Naive thymus-derived CD4-positive, alpha-beta T cell (primary cell): ENCODE measurements at regions of chrX and their contacts with region 1.

Region 1: GRCh38 chrX:129823115-129823514 is 20.6 kb downstream of the ZDHHC9 start:
- DNase-seq: peak in 8 of 9 donors; percentile 23 to 68 (median 52)
- ATAC-seq: peak; percentile 81
- H3K4me3 ChIP-seq: no peak overlapping the region
- H3K4me3 Mint-ChIP-seq: no peak overlapping the region
- H3K27ac ChIP-seq: no peak overlapping the region
- H3K27ac Mint-ChIP-seq: peak overlapping the region in 1 of 9 donors; percentile 83
- H3K4me1 ChIP-seq: peaks cover 0 to 6% of the 10 kb centered on the region in 2 donors
- H3K4me1 Mint-ChIP-seq: peaks cover 0 to 21% (median 14%) of the 10 kb centered on the region in 7 donors
- H3K27me3 ChIP-seq: no peaks in the 10 kb centered on the region
- H3K27me3 Mint-ChIP-seq: no peaks in the 10 kb centered on the region

Region 2: GRCh38 chrX:129637217-129638109 is 185.7 kb before region 1 on chrX:
- CTCF ChIA-PET with region 1: interaction called, 9 read pairs
- POLR2A ChIA-PET with region 1: no interaction called
- intact Hi-C with region 1: loop called (anchors 1 kb)
- DNase-seq: peak; percentile 48 to 80 (median 63)
- ATAC-seq: peak; percentile 92
- H3K4me3 ChIP-seq: no peak overlapping the region
- H3K4me3 Mint-ChIP-seq: no peak overlapping the region
- H3K27ac ChIP-seq: no peak overlapping the region
- H3K27ac Mint-ChIP-seq: peak overlapping the region in 3 of 9 donors; percentile 34 to 68 (median 55)
- H3K4me1 ChIP-seq: peaks cover 0 to 4% of the 10 kb centered on the region in 2 donors
- H3K4me1 Mint-ChIP-seq: peaks cover 0 to 10% (median 0%) of the 10 kb centered on the region in 7 donors
- H3K27me3 ChIP-seq: no peaks in the 10 kb centered on the region
- H3K27me3 Mint-ChIP-seq: no peaks in the 10 kb centered on the region

Region 3: DNA sequence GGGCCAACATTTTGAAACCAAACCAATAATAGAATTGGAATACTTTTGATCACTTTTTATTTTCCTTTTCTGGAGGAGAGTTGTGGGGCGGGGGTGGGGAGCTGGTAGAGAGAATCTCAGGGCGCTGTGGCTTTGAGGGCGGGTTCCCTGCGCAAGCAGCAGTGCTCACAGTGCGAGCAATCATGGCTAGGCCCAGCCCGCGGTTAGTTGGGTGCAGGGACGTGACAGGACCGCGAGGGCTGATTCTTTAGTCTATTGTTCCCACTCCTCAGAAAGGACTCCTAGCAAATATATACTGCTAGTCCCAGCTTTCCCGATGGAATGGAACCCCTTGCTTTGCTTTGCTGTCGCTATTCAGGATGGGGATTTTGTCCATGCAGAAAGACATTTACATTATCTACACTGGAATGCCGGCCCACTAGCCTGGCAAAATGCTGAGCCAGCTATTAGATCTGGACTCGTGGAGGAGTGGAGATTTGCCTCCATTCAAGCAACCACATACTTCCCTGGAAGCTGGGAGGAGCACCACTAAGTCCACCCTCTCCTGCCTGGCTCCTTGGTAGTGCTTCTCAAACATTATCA is 144.4 kb before region 1 on chrX:
- CTCF ChIA-PET with region 1: interaction called, 14 read pairs
- POLR2A ChIA-PET with region 1: interaction called, 3 read pairs
- intact Hi-C with region 1: loop called in 1 of 2 experiments (anchors 1 kb)
- DNase-seq: peak in 7 of 9 donors; percentile 6 to 40 (median 34)
- ATAC-seq: peak; percentile 78
- H3K4me3 ChIP-seq: peak overlapping the region; percentile 53
- H3K4me3 Mint-ChIP-seq: peak overlapping the region; percentile 62 to 85 (median 70)
- H3K27ac ChIP-seq: peak overlapping the region; percentile 38
- H3K27ac Mint-ChIP-seq: peak overlapping the region in 7 of 9 donors; percentile 5 to 91 (median 48)
- H3K4me1 ChIP-seq: peaks cover 5 to 14% of the 10 kb centered on the region in 2 donors
- H3K4me1 Mint-ChIP-seq: peaks cover 10 to 36% (median 23%) of the 10 kb centered on the region in 7 donors
- H3K27me3 ChIP-seq: no peaks in the 10 kb centered on the region
- H3K27me3 Mint-ChIP-seq: peaks cover 0 to 21% (median 0%) of the 10 kb centered on the region in 5 donors

Region 4: DNA sequence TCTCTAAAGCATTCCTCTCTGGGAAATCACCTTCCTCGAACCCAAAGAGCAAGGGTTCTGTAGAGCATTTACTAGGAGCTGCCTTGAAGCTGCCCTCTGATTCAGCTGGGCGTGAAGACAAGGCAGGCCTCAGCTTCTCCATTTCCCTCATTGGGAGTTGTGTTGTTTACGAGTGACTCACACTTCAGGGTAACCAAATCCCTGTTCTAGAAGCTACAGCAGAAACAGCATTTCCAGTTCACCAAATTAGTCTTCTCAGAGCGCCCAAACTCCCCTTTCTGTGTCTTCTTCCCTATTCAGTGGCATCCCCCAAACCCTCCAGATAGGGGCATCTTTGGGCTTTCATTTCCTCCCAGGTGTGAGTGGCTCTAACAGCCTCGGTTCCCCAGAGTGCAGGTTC is 85.2 kb before region 1 on chrX:
- CTCF ChIA-PET with region 1: no interaction called
- POLR2A ChIA-PET with region 1: no interaction called
- intact Hi-C with region 1: loop called in 1 of 2 experiments (anchors 2 kb)
- DNase-seq: no peak
- ATAC-seq: peak; percentile 63
- H3K4me3 ChIP-seq: no peak overlapping the region
- H3K4me3 Mint-ChIP-seq: peak overlapping the region in 1 of 10 donors; percentile 42
- H3K27ac ChIP-seq: no peak overlapping the region
- H3K27ac Mint-ChIP-seq: peak overlapping the region in 2 of 9 donors; percentile 53 to 72
- H3K4me1 ChIP-seq: peaks cover 8 to 17% of the 10 kb centered on the region in 2 donors
- H3K4me1 Mint-ChIP-seq: peaks cover 14 to 45% (median 29%) of the 10 kb centered on the region in 7 donors
- H3K27me3 ChIP-seq: no peaks in the 10 kb centered on the region
- H3K27me3 Mint-ChIP-seq: no peaks in the 10 kb centered on the region

Region 5: DNA sequence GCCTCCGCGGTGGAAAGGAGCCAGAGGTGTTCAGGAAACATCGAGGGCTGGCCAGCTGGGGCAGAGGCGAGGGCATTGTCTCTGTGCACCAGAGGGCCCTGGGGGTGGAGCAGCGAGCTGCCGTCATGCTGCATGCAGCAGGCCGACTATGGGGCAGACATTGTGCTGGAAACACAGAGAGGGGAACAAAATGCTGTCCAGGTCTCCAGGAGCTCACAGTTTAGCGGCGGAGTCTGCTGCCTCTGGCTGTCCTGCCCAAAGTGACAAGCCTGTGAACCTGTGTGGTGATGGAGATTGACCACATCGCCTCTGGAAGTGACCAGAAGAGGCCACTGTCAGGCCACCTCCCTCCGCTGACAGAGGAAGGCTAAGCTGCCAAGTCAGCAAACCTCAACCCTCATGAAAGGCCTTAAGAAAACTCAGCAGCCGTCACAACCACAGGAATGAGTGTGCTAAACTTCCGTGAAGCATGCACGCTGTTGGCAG is 63.5 kb before region 1 on chrX:
- CTCF ChIA-PET with region 1: interaction called, 11 read pairs
- POLR2A ChIA-PET with region 1: interaction called, 3 read pairs
- intact Hi-C with region 1: loop called (anchors 1 to 2 kb)
- DNase-seq: peak in 8 of 9 donors; percentile 40 to 69 (median 59)
- ATAC-seq: peak; percentile 85
- H3K4me3 ChIP-seq: no peak overlapping the region
- H3K4me3 Mint-ChIP-seq: peak overlapping the region; percentile 8 to 64 (median 51)
- H3K27ac ChIP-seq: no peak overlapping the region
- H3K27ac Mint-ChIP-seq: peak overlapping the region in 7 of 9 donors; percentile 10 to 90 (median 31)
- H3K4me1 ChIP-seq: peaks cover 50 to 55% of the 10 kb centered on the region in 2 donors
- H3K4me1 Mint-ChIP-seq: peaks cover 16 to 67% (median 59%) of the 10 kb centered on the region in 7 donors
- H3K27me3 ChIP-seq: no peaks in the 10 kb centered on the region
- H3K27me3 Mint-ChIP-seq: no peaks in the 10 kb centered on the region

Region 6: DNA sequence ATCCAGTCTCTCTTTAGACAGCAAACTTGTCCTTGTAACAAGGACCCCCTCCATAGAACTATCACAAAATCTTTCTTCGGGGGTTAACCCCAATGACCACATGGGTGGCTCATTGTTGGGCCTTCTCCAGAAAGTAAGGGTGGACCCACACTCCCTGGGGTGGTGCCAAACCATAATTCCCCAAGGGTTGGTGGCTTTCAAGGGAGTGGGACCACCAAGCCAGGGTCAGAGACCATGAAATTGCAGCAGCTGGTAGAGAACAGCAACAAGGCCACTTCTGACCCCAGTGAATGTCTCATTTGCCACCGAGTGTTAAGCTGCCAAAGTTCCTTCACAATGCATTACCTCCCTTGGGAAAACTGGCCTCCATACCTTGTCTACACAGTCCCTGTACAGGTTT is 49.4 kb after region 1 on chrX:
- CTCF ChIA-PET with region 1: no interaction called
- POLR2A ChIA-PET with region 1: no interaction called
- intact Hi-C with region 1: no loop called
- DNase-seq: no peak
- ATAC-seq: no peak
- H3K4me3 ChIP-seq: no peak overlapping the region
- H3K4me3 Mint-ChIP-seq: no peak overlapping the region
- H3K27ac ChIP-seq: no peak overlapping the region
- H3K27ac Mint-ChIP-seq: no peak overlapping the region
- H3K4me1 ChIP-seq: no peaks in the 10 kb centered on the region
- H3K4me1 Mint-ChIP-seq: no peaks in the 10 kb centered on the region
- H3K27me3 ChIP-seq: no peaks in the 10 kb centered on the region
- H3K27me3 Mint-ChIP-seq: peaks cover 0 to 7% (median 0%) of the 10 kb centered on the region in 5 donors

Region 7: GRCh38 chrX:130060122-130061069 is 237.3 kb after region 1 on chrX:
- CTCF ChIA-PET with region 1: no interaction called
- POLR2A ChIA-PET with region 1: no interaction called
- intact Hi-C with region 1: loop called in 1 of 2 experiments (anchors 10 kb)
- DNase-seq: peak; percentile 51 to 92 (median 68)
- ATAC-seq: peak; percentile 95
- H3K4me3 ChIP-seq: peak overlapping the region; percentile 51
- H3K4me3 Mint-ChIP-seq: peak overlapping the region; percentile 54 to 79 (median 71)
- H3K27ac ChIP-seq: peak overlapping the region; percentile 60
- H3K27ac Mint-ChIP-seq: peak overlapping the region in 2 of 9 donors; percentile 26 to 76
- H3K4me1 ChIP-seq: no peaks in the 10 kb centered on the region
- H3K4me1 Mint-ChIP-seq: peaks cover 0 to 14% (median 6%) of the 10 kb centered on the region in 7 donors
- H3K27me3 ChIP-seq: no peaks in the 10 kb centered on the region
- H3K27me3 Mint-ChIP-seq: no peaks in the 10 kb centered on the region

Region 8: GRCh38 chrX:130788786-130789581 is 965.9 kb after region 1 on chrX:
- CTCF ChIA-PET with region 1: no interaction called
- POLR2A ChIA-PET with region 1: no interaction called
- intact Hi-C with region 1: no loop called
- DNase-seq: no peak
- ATAC-seq: no peak
- H3K4me3 ChIP-seq: no peak overlapping the region
- H3K4me3 Mint-ChIP-seq: no peak overlapping the region
- H3K27ac ChIP-seq: no peak overlapping the region
- H3K27ac Mint-ChIP-seq: no peak overlapping the region
- H3K4me1 ChIP-seq: no peaks in the 10 kb centered on the region
- H3K4me1 Mint-ChIP-seq: no peaks in the 10 kb centered on the region
- H3K27me3 ChIP-seq: no peaks in the 10 kb centered on the region
- H3K27me3 Mint-ChIP-seq: no peaks in the 10 kb centered on the region